ENCODE measurements at regions of chr22 and their contacts with region 1.

Region 1: GRCh38 chr22:29245637-29246385 is 22.0 kb downstream of the RHBDD3 start:
- DNase-seq: no peak
- H3K4me3 ChIP-seq: no peak overlapping the region
- H3K27me3 ChIP-seq: peaks cover 3% of the 10 kb centered on the region
- CTCF ChIP-seq: peak; percentile 97

Region 2: DNA sequence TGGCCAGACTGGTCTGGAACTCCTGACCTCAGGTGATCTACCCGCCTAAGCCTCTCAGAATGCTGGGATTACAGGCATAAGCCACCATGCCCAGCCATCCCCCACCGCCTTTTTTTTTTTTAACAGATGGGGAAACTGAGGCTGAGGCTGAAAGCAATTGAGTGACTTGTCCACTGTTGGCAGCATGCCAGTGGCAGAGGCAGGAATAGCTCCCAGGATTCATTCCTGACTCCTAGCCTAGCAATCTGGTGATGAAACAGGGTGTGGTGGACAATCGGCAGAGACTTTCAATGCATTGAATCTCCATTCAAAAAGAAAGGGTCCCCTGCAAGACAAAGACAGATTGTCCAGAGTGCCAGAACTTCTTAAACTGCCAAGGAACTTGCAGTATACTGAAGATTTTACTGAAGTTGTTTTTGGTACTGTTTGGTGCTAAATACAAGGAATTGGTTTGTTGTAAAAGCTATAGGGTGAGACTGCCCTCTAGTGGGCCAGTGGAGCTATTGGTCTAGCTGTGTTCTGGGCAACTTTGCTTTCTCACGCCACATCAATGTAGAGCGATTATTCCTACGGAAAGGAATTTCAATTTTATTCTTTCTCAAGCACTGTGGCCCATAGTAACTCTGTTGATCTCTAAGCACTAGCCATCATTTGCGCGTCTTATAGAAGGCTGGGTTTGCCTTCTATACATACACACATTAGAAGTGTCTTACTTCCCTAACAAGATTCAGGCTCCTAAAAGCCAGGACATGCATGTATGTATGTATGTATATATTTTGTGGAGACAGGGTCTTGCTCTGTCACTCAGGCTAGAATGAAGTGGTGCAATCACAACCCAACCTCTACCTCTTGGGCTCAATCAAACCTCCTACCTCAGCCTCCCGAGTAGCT is 205.2 kb before region 1 on chr22:
- CTCF ChIA-PET with region 1: interaction called, 26 read pairs
- POLR2A ChIA-PET with region 1: no interaction called
- DNase-seq: peak; percentile 46
- H3K4me3 ChIP-seq: no peak overlapping the region
- H3K27me3 ChIP-seq: no peaks in the 10 kb centered on the region
- CTCF ChIP-seq: peak; percentile 96

Region 3: DNA sequence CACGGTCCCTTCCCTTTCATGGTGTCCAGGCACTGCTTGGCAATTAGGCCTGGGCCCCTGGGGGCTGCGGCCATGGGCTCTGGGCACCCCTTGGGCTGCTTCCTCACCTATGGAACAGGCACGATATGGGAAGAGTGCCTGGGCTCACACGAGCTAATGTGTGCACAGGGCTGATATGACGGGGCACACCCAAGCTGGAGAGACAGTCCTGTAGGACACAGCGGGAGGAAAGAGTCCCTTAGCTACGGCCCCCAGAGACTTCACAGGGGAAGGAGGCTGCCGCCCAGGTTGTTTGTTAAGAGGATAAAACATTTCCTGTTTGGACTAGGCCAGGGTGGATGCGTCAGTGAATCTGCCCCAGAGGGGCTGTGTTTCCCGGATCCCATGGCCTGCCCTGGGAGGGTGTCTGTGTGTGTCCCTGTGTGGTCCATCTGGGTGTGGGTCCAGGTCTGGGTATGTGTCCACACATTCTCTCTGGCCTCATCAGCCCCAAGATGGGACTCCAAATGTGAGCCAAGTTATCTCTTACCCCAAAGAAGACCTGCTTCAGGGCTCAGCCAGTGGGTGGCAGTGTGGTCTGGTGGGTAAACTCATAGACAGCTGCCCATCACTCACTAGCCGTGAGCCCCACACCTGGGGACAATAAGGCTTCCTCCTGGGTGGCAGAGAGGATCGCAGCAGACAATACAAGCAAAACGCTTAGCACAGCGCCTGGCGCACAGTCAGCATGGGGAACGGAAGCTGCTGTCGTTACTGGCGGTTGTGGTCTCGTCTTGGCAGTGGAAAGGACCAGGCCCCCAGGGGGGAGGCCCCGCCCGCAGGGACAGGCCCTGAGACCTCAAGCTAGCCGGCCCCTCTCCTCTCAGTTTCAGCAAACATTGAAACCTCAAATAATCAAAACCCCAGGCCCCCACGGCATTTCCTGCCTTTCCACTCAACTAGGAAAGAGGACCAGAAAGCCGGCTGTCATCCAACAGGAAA is 43.3 kb before region 1 on chr22:
- CTCF ChIA-PET with region 1: interaction called, 14 read pairs
- POLR2A ChIA-PET with region 1: no interaction called
- DNase-seq: no peak
- H3K4me3 ChIP-seq: no peak overlapping the region
- H3K27me3 ChIP-seq: peaks cover 18% of the 10 kb centered on the region
- CTCF ChIP-seq: peak; percentile 38

Region 4: DNA sequence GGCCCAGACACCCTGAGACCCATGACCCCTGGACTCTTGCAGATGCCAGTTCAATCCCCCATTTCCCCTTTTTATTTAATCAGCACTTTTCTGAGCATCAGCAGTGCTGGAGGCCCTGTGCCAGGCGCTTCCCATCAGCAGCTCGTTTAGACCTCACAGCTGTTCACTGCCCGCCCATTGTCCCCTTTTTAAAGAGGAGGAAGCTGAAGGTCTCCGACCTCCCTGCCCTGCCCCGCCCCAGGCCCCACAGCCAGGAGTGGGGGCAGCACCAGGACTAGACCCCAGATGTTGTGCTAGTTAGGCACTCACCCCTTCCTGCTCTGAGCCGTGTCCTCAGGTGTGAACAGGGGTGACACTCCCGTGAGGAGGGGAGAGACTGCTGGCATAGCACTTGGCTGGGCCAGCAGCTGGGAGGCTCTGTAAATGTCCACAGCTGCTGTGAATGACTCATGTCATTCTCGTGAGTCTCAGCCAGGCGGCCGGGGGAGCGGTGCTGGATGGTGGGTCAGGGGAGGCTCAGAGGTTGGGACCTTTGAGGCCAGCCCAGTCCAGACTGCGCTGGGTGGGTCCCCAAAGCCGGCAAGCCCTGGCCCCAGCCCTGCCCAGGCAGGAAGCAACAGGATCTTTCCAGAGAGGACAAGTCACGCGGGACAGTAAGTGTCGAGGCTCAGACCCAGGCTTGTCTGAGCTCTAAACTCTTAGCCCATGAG is 20.2 kb before region 1 on chr22:
- CTCF ChIA-PET with region 1: interaction called, 15 read pairs
- POLR2A ChIA-PET with region 1: no interaction called
- DNase-seq: no peak
- H3K4me3 ChIP-seq: no peak overlapping the region
- H3K27me3 ChIP-seq: peaks cover 12% of the 10 kb centered on the region
- CTCF ChIP-seq: no peak

Region 5: GRCh38 chr22:29263791-29264276 is 18.0 kb after region 1 on chr22:
- CTCF ChIA-PET with region 1: interaction called, 10 read pairs
- POLR2A ChIA-PET with region 1: no interaction called
- DNase-seq: no peak
- H3K4me3 ChIP-seq: no peak overlapping the region
- H3K27me3 ChIP-seq: no peaks in the 10 kb centered on the region
- CTCF ChIP-seq: no peak